BJ (cell line): ENCODE measurements at regions of chr13 and their contacts with region 1.

Region 1: DNA sequence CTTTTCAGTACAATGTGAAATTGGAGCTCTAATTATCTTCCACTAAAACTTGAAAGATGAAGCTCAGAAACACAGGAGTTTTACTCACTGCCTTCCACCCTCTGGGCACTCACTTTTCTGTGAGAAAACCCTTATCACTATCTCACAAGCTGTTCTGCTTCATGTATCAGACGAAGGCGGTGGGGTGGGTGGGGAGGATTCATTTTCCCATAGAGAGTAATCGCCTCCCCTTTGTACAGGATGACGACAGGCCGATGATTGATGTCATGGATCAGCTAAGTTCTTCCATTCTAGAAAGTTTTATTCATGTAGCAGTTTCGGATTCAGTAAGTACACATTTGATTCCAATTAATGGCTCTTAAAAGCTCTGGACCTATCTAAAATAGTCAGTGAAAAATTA is 139.9 kb downstream of the ZAR1L start:
- DNase-seq: no peak
- H3K4me3 ChIP-seq: no peak overlapping the region
- H3K27me3 ChIP-seq: no peaks in the 10 kb centered on the region
- CTCF ChIP-seq: no peak

Region 2: DNA sequence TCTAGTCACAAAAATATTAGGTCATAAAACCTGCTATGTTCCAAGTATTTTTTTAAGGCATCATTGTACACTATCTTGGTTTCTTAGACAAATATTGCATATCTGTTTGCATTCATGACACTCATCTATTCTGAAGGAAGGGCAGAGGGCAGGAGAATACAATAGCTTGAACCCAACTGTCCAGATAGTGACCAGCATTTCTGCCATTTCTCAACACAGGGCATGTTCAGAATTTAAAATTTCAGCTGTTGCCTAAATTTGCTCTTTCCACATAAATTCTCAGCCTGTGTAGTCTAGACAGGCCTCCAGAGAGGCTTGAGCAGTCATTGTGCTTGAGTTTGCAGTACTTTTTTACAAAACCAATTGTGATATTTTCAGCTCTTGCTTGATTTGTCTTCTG is 20.4 kb after region 1 on chr13:
- CTCF ChIA-PET with region 1: no interaction called
- POLR2A ChIA-PET with region 1: interaction called, 11 read pairs
- DNase-seq: no peak
- H3K4me3 ChIP-seq: no peak overlapping the region
- H3K27me3 ChIP-seq: no peaks in the 10 kb centered on the region
- CTCF ChIP-seq: no peak